Gastrocnemius medialis (tissue), 4 donors: ENCODE measurements at regions of chr16 and their contacts with region 1.

Region 1: DNA sequence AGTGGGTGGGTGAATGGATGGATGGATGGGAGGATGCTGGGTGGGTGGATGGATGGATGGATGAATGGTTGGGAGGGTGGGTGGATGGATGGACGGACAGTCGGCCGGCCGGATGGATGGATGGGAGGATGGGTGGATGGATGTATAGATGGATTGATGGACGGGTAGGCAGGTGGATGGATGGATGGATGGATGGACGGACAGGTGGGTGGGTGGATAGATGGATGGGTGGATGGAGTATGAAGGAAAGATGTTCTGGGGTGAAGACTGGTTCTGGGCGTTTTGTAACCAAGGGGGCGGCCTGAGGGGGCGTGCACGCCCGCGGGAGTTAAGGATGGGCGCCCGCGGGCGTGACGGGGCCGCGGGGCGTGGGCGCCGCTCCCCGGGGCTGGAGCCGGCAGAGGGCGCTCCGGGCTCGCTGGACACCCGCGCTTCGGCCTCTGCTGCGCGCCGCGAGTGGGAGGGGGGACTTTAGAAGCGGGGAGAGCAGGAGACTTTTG is at the start of gene NECAB2:
- DNase-seq: no peak
- ATAC-seq: no peak
- H3K4me3 ChIP-seq: peak within 1 kb of the TSS in 2 of 4 donors; percentile 28 to 29
- H3K27ac ChIP-seq: no peak within 1 kb of the TSS
- H3K4me1 ChIP-seq: no peaks in the 10 kb centered on the region
- H3K27me3 ChIP-seq: peaks cover 0 to 7% (median 0%) of the 10 kb centered on the region in 3 donors
- CTCF ChIP-seq: peak in 3 of 5 experiments; percentile 32 to 69 (median 56)
- POLR2A ChIP-seq: no peak
- total RNA-seq, gene NECAB2: not detected

Region 2: DNA sequence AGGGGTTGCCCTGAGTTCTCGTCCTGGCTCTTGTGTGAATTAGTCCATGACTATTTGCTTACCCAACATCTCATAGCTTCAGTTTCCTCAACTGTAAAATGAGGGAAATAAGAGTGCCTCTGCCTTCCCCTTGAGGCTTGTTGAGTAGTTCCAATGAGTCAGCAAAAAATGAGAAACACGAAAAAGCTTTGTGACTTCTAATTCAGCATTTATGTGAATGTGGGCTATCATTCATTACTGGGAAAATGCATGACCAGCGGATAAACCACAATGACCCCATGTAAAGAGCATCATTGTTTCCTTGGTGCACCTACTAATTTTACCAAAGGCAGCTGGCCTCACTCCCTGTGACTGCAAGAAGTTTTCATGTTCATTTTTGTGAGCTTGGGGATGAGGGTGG is 534.7 kb before region 1 on chr16:
- in situ Hi-C with region 1: no loop called
- intact Hi-C with region 1: no loop called
- DNase-seq: no peak
- ATAC-seq: no peak
- H3K4me3 ChIP-seq: no peak overlapping the region
- H3K27ac ChIP-seq: no peak overlapping the region
- H3K4me1 ChIP-seq: no peaks in the 10 kb centered on the region
- H3K27me3 ChIP-seq: no peaks in the 10 kb centered on the region
- CTCF ChIP-seq: no peak
- POLR2A ChIP-seq: no peak

Region 3: GRCh38 chr16:83994087-83994486 is 26.2 kb after region 1 on chr16:
- in situ Hi-C with region 1: no loop called
- intact Hi-C with region 1: no loop called
- DNase-seq: no peak
- ATAC-seq: no peak
- H3K4me3 ChIP-seq: no peak overlapping the region
- H3K27ac ChIP-seq: no peak overlapping the region
- H3K4me1 ChIP-seq: peaks cover 4 to 11% of the 10 kb centered on the region in 2 donors
- H3K27me3 ChIP-seq: peaks cover 0 to 3% (median 0%) of the 10 kb centered on the region in 3 donors
- CTCF ChIP-seq: no peak
- POLR2A ChIP-seq: no peak

Region 4: GRCh38 chr16:84055366-84055765 is 87.5 kb after region 1 on chr16:
- in situ Hi-C with region 1: loop called in 3 of 4 experiments (anchors 10 to 25 kb)
- intact Hi-C with region 1: no loop called
- DNase-seq: no peak
- ATAC-seq: peak in 1 of 2 donors; percentile 23
- H3K4me3 ChIP-seq: no peak overlapping the region
- H3K27ac ChIP-seq: no peak overlapping the region
- H3K4me1 ChIP-seq: no peaks in the 10 kb centered on the region
- H3K27me3 ChIP-seq: no peaks in the 10 kb centered on the region
- CTCF ChIP-seq: no peak
- POLR2A ChIP-seq: no peak